ENCODE measurements at regions of chr2 and their contacts with region 1.

Region 1: GRCh38 chr2:176814306-176815052 is 398.1 kb upstream of the HNRNPA3 start:
- DNase-seq: no peak

Region 2: GRCh38 chr2:176126929-176127773 is 687.3 kb before region 1 on chr2:
- intact Hi-C with region 1: loop called (anchors 2 to 5 kb)
- DNase-seq: no peak

Region 3: DNA sequence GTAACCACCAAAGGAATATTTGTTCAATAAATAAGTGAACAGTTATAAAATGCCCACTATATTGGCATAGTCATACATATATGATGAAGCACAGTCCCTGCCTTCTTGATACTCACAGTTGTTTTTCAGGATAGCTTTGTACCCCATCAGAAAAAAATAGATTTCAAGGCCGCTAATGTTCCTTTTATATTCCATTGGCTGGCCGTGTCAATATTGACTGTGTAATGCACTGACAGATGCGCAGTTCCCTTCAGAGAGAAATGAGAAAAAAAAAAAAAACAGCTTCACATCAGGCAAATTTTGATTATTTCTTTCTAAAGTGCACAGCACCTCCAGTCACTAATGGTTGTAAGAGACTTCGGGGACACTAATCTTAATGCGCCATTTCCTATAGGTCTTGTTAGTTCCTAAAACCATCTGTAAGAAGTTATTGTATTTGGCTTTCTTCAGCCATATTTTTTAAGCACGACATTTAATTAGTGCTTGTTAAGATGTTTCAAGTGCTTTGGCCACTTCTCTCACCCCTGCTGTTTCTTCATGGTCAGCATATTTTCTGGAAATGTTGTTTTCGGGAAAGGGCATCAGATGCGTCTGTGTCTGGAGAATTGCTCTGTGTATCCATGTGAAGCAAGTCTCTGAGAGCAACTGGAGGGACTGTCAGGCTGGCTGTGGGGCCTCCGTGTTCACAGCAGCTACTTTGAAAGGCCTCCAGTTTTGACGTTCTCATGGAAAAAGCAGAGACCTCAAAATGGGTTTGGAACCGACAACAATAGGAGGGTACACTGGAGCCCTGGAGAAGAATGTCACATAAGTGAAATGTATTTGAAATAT is 166.9 kb before region 1 on chr2:
- intact Hi-C with region 1: loop called in 1 of 2 experiments (anchors 5 kb)
- DNase-seq: no peak

Region 4: DNA sequence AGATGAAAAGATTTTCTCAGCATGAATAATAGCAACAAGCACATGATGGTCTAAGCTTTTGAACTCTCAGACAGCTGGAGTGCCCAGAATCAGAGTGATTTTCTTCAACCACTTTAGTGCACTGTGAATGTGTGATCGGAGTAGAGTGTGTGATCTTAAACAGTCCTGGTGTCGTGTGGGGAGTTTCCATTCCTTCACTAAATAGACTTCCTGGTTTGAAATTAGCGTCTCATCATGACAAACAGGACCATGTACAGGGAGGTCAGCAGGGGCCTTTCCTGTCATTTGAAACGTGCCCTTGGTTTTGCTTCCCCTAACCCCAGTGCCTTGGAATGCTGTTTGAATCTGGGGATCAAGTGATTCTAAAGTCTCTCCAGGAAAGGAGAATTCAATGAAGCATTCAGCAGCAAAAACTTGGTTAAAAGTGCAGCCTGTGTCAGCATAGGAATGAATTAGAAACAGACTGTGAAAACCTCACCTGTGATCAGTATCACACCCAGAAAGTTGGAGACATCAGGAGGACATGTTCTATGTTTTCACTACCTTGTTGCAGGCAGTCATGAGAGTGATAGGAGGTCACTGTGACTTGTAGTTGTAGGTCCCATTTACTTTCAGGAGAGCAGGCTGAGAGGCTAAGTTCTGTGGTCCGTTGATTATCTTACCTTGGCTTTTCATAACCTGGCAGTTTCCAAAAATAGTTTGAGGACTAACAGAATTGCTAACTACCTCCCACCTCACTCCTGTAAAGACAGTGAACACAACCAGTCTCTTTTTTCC is 144.9 kb before region 1 on chr2:
- intact Hi-C with region 1: loop called in 1 of 2 experiments (anchors 10 kb)
- DNase-seq: no peak

Region 5: DNA sequence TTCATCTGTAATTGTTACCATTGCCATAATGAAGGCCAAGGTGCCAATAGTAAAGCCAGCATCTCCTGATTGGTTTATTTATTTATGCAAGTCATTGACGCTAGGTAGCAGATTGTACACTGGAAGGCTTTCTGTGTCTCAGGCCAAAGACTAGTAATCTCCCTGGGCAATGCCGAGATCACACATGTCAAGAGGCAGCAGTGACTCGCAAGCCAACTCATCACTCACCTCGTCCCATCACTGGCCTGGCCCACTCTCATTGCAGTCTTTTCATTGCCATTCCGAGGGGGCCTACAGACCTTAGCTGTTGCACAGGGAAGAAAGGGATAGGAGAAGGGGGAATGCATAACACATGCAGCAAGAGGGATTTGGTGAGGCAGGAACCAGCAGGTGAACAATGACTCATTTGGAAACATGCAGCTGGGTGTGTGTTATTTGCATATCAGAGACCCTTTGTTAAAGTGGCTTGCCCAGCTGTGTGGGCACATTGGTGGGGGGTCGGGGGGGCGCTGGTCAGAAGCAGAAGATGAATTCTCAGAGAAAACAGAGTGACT is 50.6 kb before region 1 on chr2:
- intact Hi-C with region 1: loop called in 1 of 2 experiments (anchors 10 kb)
- DNase-seq: no peak

Region 6: GRCh38 chr2:176845694-176846093 is 31.2 kb after region 1 on chr2:
- intact Hi-C with region 1: no loop called
- DNase-seq: no peak

Region 7: DNA sequence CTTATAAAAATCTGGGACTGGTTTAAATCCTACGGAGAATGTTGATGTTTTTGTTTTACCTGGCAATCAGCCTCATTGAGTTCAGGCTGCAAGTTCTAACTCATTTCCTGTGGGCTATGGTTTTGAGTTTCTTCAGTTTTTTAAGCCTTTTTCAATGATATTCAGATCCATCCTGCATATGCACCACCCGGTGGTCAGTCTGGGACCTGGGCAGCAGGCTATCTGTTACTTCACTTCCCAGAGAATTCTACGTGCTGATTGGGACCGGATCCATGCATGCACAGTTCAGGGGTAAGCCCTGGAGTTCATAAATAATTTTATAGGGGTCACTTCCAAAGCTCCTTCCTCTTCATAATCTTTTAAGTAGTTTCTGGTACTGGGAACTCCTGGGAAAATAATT is 58.9 kb after region 1 on chr2:
- intact Hi-C with region 1: no loop called
- DNase-seq: no peak

Region 8: DNA sequence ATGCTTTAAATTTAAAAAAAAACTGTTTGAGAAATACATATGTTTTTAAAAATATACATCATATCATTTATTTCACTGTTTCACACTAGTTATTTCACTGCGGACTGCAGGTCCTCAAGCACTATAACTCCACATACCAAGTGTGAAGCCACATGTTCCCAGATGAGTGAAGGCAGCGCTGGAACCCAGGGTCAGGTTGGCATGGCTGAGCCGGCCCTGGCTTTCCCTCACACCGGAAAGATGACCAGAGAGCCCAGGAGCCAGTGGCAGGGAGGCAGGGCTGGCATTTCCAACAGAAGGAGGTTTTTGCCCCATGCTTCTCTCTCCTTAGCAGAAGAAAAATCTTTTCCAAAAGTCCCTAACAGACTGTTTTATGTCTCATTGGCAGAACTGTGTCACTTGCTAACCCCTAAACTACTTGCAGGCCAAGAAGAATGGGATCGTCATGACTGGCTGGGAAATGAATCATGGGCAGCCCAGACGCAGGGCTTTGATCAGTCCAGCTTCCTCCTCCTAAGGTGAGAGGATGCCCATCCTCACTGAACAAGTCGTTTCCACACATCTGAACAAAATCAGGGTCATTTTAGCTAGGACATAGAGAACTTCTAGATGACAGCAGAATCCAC is 110.5 kb after region 1 on chr2:
- intact Hi-C with region 1: no loop called
- DNase-seq: no peak

Region 9: DNA sequence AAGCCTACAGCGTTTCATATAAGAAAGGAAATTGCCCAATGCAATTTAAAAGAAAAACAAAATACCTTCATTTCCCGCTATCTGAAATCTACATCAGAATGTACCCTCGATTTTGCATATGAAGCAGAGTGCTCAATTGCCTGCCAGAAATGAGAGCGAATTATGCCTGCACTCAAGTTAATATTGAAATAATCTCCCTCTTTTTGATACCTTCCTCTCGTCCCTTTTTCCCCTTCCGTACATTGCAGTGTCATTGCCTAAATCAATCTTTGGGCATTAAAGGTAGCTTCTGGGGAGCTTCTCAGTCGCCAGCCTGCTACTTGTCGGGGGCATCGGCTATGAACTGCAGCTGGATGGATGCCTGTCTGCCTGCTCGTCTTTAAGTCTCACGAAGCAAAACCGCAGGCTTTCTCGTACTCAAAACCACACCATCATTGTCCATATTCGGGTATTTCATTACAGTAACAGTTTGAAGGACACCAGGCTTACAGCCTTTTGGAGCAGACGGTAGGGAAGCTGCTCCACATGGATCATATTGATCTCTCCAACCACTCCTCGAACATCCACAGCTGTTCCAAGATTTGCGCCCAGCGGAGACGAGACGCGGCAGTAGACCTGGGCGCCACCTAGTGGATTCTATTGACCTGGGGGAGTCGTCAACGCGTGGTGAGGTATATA is 334.1 kb after region 1 on chr2:
- intact Hi-C with region 1: loop called (anchors 1 to 5 kb)
- DNase-seq: peak; percentile 89

Region 10: DNA sequence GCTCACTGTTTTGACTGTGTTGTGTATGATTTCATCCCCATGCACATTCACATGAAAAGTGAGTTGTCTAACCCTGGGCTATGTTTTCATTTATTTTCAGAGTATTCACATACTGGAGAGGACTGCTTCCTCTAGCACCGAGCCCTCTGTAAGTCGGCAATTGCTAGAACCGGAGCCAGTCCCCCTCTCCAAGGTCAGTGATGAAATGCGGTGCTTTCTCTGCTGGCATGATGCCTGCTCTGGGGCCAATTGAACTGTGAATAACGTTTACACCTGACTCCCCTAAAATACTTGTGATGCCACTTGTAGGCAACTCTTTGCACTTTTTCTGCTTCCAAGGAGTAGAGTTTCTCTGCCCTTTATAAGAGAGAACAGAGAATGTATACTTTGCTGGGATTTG is 1509.6 kb after region 1 on chr2:
- intact Hi-C with region 1: no loop called
- DNase-seq: no peak